Spleen (tissue), 13 donors: ENCODE measurements at regions of chr6 and their contacts with region 1.

Region 1: DNA sequence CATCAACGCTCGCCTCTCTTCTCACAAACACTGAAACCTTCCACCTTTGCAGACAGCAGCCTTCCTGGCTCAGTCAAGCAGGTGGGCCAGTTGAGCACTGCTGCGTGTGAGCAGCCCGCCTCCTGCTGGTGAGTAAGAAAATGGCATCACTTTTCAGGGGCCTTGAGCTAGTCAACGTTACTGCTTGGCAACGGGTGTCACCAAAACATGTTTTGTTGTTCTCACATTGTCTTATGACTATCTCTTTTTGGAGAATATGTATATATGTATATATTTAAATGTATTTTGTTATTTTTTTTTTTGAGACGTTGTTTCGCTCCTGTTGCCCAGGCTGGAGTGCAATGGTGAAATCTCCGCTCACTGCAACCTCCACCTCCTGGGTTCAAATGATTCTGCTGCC is 97.0 kb upstream of the AGPAT4 start:
- DNase-seq: peak; percentile 85
- H3K4me3 ChIP-seq: no peak overlapping the region
- H3K27ac ChIP-seq: no peak overlapping the region
- H3K4me1 ChIP-seq: peaks cover 2 to 18% (median 13%) of the 10 kb centered on the region in 6 donors
- H3K27me3 ChIP-seq: no peaks in the 10 kb centered on the region
- CTCF ChIP-seq: peak; percentile 65 to 88 (median 79)
- POLR2A ChIP-seq: no peak

Region 2: GRCh38 chr6:160733050-160733646 is 637.7 kb before region 1 on chr6:
- intact Hi-C with region 1: loop called (anchors 10 kb)
- DNase-seq: no peak
- H3K4me3 ChIP-seq: no peak overlapping the region
- H3K27ac ChIP-seq: no peak overlapping the region
- H3K4me1 ChIP-seq: no peaks in the 10 kb centered on the region
- H3K27me3 ChIP-seq: peaks cover 0 to 14% (median 0%) of the 10 kb centered on the region in 7 donors
- CTCF ChIP-seq: peak in 8 of 11 experiments; percentile 29 to 66 (median 50)
- POLR2A ChIP-seq: no peak

Region 3: GRCh38 chr6:160930547-160931377 is 440.1 kb before region 1 on chr6:
- intact Hi-C with region 1: loop called (anchors 5 kb)
- DNase-seq: peak; percentile 87
- H3K4me3 ChIP-seq: peak overlapping the region; percentile 12 to 69 (median 33)
- H3K27ac ChIP-seq: no peak overlapping the region
- H3K4me1 ChIP-seq: peaks cover 0 to 19% (median 13%) of the 10 kb centered on the region in 6 donors
- H3K27me3 ChIP-seq: peaks cover 0 to 46% (median 9%) of the 10 kb centered on the region in 7 donors
- CTCF ChIP-seq: peak; percentile 63 to 88 (median 80)
- POLR2A ChIP-seq: no peak

Region 4: GRCh38 chr6:161152907-161153662 is 217.8 kb before region 1 on chr6:
- intact Hi-C with region 1: loop called (anchors 10 kb)
- DNase-seq: no peak
- H3K4me3 ChIP-seq: no peak overlapping the region
- H3K27ac ChIP-seq: no peak overlapping the region
- H3K4me1 ChIP-seq: peaks cover 0 to 4% (median 0%) of the 10 kb centered on the region in 6 donors
- H3K27me3 ChIP-seq: no peaks in the 10 kb centered on the region
- CTCF ChIP-seq: peak in 7 of 11 experiments; percentile 29 to 55 (median 47)
- POLR2A ChIP-seq: no peak

Region 5: GRCh38 chr6:161341638-161342433 is 29.0 kb before region 1 on chr6:
- intact Hi-C with region 1: no loop called
- DNase-seq: no peak
- H3K4me3 ChIP-seq: no peak overlapping the region
- H3K27ac ChIP-seq: no peak overlapping the region
- H3K4me1 ChIP-seq: no peaks in the 10 kb centered on the region
- H3K27me3 ChIP-seq: no peaks in the 10 kb centered on the region
- CTCF ChIP-seq: no peak
- POLR2A ChIP-seq: no peak